T-cell (primary cell): ENCODE measurements at regions of chr20 and their contacts with region 1.

Region 1: GRCh38 chr20:3749659-3750531 is 17.4 kb downstream of the HSPA12B start:
- DNase-seq: peak in 12 of 35 experiments; percentile 12 to 46 (median 18)
- ATAC-seq: peak in 1 of 4 experiments; percentile 13
- H3K4me3 ChIP-seq: no peak overlapping the region
- H3K4me3 Mint-ChIP-seq: peak overlapping the region in 1 of 3 donors; percentile 53
- H3K27ac ChIP-seq: no peak overlapping the region
- H3K27ac Mint-ChIP-seq: no peak overlapping the region
- H3K4me1 ChIP-seq: peaks cover 0 to 9% of the 10 kb centered on the region in 2 experiments
- H3K4me1 Mint-ChIP-seq: peaks cover 10 to 22% (median 20%) of the 10 kb centered on the region in 3 donors
- H3K27me3 ChIP-seq: peaks cover 0 to 57% of the 10 kb centered on the region in 2 experiments
- H3K27me3 Mint-ChIP-seq: peaks cover 0 to 23% of the 10 kb centered on the region in 2 donors

Region 2: DNA sequence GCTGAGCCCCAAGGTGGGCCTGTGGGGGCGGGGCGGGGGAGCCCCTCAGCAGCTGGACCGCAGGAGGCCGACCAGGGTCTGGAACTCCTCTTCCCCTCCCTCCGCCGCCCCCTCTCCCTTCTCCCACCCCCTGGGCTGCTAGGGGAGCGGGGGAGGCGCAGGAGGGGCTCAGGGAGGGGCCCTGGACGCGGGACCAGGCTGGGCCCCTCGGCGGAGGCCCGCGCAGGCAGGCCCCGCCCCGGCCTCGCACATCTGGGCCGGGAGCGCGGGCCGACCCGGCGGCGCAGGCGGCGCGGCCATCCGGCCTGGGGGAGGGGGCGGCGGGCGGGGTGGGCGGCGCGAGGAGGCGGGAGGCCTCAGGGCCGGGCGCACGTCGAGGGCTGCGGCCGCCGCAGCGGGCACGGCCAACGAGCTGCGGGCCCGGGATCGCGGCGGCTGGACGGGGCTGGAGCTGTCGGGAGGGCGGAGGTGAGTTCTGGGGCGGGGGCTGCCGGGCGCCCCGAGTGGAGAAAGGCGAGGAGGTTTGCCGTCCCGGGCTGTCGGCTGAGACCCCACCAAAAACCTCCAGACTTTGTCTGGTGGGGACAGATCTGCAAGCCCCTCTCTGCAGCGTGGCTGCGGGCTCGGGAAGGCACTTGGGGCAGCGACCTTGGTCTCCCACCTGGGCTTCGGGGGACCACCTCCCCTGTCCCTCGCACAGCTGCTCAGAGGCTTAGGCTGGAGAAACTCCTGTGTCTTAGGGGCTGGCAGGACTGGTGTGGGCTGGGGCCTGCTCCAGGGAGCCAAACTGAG is 17.4 kb before region 1 on chr20 and contains the start of gene HSPA12B:
- CTCF ChIA-PET with region 1: no interaction called
- POLR2A ChIA-PET with region 1: no interaction called
- DNase-seq: no peak
- ATAC-seq: peak in 1 of 4 experiments; percentile 9
- H3K4me3 ChIP-seq: peak within 1 kb of the TSS in 1 of 2 donors; percentile 7
- H3K4me3 Mint-ChIP-seq: peak within 1 kb of the TSS in 1 of 3 donors; percentile 38
- H3K27ac ChIP-seq: no peak within 1 kb of the TSS
- H3K27ac Mint-ChIP-seq: peak within 1 kb of the TSS in 1 of 2 donors; percentile 23
- H3K4me1 ChIP-seq: peaks cover 0 to 5% of the 10 kb centered on the region in 2 experiments
- H3K4me1 Mint-ChIP-seq: peaks cover 0 to 3% (median 0%) of the 10 kb centered on the region in 3 donors
- H3K27me3 ChIP-seq: peaks cover 0 to 65% of the 10 kb centered on the region in 2 experiments
- H3K27me3 Mint-ChIP-seq: peaks cover 38 to 53% of the 10 kb centered on the region in 2 donors
- total RNA-seq, gene HSPA12B: 0.10 to 0.12 TPM in 2 of 5 donors, not detected in the others

Region 3: GRCh38 chr20:3826420-3826819 is 76.5 kb after region 1 on chr20:
- CTCF ChIA-PET with region 1: no interaction called
- POLR2A ChIA-PET with region 1: interaction called in 1 of 2 experiments, 10 read pairs
- DNase-seq: no peak
- ATAC-seq: no peak
- H3K4me3 ChIP-seq: no peak overlapping the region
- H3K4me3 Mint-ChIP-seq: no peak overlapping the region
- H3K27ac ChIP-seq: no peak overlapping the region
- H3K27ac Mint-ChIP-seq: peak overlapping the region in 1 of 2 donors; percentile 52
- H3K4me1 ChIP-seq: peaks cover 0 to 5% of the 10 kb centered on the region in 2 experiments
- H3K4me1 Mint-ChIP-seq: peaks cover 4 to 7% (median 7%) of the 10 kb centered on the region in 3 donors
- H3K27me3 ChIP-seq: no peaks in the 10 kb centered on the region
- H3K27me3 Mint-ChIP-seq: no peaks in the 10 kb centered on the region